ENCODE measurements at regions of chr1 and their contacts with region 1.

Region 1: GRCh38 chr1:155084722-155085503 is 6.3 kb downstream of the EFNA3 start:
- DNase-seq: peak; percentile 97
- ATAC-seq: peak; percentile 78
- H3K4me3 Mint-ChIP-seq: peak overlapping the region; percentile 91
- H3K27ac Mint-ChIP-seq: peak overlapping the region; percentile 94
- H3K4me1 Mint-ChIP-seq: peaks cover 26% of the 10 kb centered on the region
- H3K27me3 Mint-ChIP-seq: peaks cover 35% of the 10 kb centered on the region
- CTCF ChIP-seq: peak; percentile 89

Region 2: GRCh38 chr1:154863315-154864174 is 221.4 kb before region 1 on chr1:
- CTCF ChIA-PET with region 1: no interaction called
- POLR2A ChIA-PET with region 1: no interaction called
- intact Hi-C with region 1: no loop called
- DNase-seq: peak; percentile 58
- ATAC-seq: peak; percentile 57
- H3K4me3 Mint-ChIP-seq: no peak overlapping the region
- H3K27ac Mint-ChIP-seq: peak overlapping the region; percentile 64
- H3K4me1 Mint-ChIP-seq: peaks cover 30% of the 10 kb centered on the region
- H3K27me3 Mint-ChIP-seq: peaks cover 13% of the 10 kb centered on the region
- CTCF ChIP-seq: peak; percentile 41

Region 3: DNA sequence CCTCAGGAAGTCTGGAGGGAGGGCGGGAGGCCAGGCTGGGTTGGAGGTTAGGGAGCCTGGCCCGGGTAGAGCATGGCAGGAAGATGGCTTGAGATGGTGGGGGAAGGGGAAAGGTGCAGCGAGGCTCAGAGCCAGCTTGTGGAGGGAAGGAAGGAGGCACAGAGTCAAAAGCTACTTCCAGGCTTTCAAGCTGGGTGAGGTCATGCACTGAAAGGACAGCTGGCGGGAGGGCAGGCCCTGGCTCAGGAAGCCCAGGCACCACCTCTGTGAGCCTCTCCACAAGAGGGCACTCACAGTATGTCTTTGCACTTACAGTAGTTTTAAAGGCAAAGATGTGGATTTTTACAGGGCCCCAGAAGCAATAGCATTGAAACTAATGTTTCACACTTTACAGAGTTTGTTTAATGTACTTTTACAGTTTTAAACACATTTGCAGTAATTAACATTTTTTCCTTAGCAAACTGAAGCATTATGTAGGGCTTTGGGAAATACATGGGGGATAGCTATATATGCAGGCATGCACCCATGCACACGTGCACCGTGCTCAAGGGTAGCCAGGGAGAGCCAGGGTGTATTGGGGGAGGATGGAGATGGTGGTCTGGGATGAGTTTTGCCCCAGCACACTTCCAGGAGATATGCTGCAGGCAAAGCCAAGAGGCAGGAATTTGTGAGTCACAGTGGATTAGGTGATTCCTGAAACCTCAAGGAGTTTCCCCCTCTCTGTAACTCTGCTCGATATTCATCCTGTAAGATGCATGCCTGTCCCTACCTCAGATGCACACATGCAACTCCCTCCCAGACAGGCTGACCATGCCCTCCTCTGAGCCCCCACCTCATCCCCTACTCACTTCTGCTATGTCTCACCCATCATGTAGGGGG is 39.9 kb before region 1 on chr1:
- CTCF ChIA-PET with region 1: interaction called, 278 read pairs
- POLR2A ChIA-PET with region 1: no interaction called
- intact Hi-C with region 1: loop called (anchors 5 kb)
- DNase-seq: peak; percentile 82
- ATAC-seq: peak; percentile 98
- H3K4me3 Mint-ChIP-seq: no peak overlapping the region
- H3K27ac Mint-ChIP-seq: peak overlapping the region; percentile 10
- H3K4me1 Mint-ChIP-seq: peaks cover 5% of the 10 kb centered on the region
- H3K27me3 Mint-ChIP-seq: peaks cover 2% of the 10 kb centered on the region
- CTCF ChIP-seq: peak; percentile 60

Region 4: DNA sequence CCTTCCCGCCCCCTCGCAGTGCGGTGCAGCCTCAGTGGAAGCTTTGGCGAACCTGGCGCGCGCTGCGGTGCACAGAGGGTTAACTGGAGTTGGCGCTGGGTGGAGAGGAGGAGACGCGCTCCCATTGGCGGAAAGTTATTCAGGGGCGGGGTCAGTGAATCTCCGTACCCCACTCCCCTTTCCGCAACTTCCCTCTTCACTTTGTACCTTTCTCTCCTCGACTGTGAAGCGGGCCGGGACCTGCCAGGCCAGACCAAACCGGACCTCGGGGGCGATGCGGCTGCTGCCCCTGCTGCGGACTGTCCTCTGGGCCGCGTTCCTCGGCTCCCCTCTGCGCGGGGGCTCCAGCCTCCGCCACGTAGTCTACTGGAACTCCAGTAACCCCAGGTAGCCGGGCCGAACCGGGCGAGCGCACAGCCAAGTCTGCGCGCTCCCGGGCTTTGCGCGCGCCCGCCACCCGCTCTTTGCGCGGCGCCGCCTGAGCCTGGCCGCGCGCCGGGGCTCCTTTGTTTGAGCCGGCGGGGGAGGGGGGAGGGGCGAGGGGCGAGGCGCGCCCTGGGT is 21.3 kb before region 1 on chr1 and contains the start of gene EFNA4:
- CTCF ChIA-PET with region 1: interaction called, 278 read pairs
- POLR2A ChIA-PET with region 1: interaction called, 12 read pairs
- intact Hi-C with region 1: loop called (anchors 2 kb)
- DNase-seq: peak; percentile 88
- ATAC-seq: peak; percentile 80
- H3K4me3 Mint-ChIP-seq: peak within 1 kb of the TSS; percentile 77
- H3K27ac Mint-ChIP-seq: peak within 1 kb of the TSS; percentile 39
- H3K4me1 Mint-ChIP-seq: peaks cover 32% of the 10 kb centered on the region
- H3K27me3 Mint-ChIP-seq: no peaks in the 10 kb centered on the region
- CTCF ChIP-seq: no peak
- total RNA-seq, gene EFNA4: 7.1 to 7.8 TPM

Region 5: GRCh38 chr1:155127105-155127964 is 42.4 kb after region 1 on chr1 and contains the start of gene EFNA1:
- CTCF ChIA-PET with region 1: interaction called, 10 read pairs
- POLR2A ChIA-PET with region 1: no interaction called
- intact Hi-C with region 1: loop called (anchors 2 kb)
- DNase-seq: peak; percentile 43
- ATAC-seq: peak; percentile 59
- H3K4me3 Mint-ChIP-seq: peak within 1 kb of the TSS; percentile 73
- H3K27ac Mint-ChIP-seq: peak within 1 kb of the TSS; percentile 34
- H3K4me1 Mint-ChIP-seq: peaks cover 34% of the 10 kb centered on the region
- H3K27me3 Mint-ChIP-seq: peaks cover 21% of the 10 kb centered on the region
- CTCF ChIP-seq: no peak
- total RNA-seq, gene EFNA1: 0.59 to 0.60 TPM

Region 6: GRCh38 chr1:155167166-155168104 is 82.5 kb after region 1 on chr1:
- CTCF ChIA-PET with region 1: interaction called, 312 read pairs
- POLR2A ChIA-PET with region 1: interaction called, 4 read pairs
- intact Hi-C with region 1: no loop called
- DNase-seq: peak; percentile 94
- ATAC-seq: peak; percentile 82
- H3K4me3 Mint-ChIP-seq: peak overlapping the region; percentile 50
- H3K27ac Mint-ChIP-seq: no peak overlapping the region
- H3K4me1 Mint-ChIP-seq: peaks cover 25% of the 10 kb centered on the region
- H3K27me3 Mint-ChIP-seq: no peaks in the 10 kb centered on the region
- CTCF ChIP-seq: peak; percentile 90

Region 7: DNA sequence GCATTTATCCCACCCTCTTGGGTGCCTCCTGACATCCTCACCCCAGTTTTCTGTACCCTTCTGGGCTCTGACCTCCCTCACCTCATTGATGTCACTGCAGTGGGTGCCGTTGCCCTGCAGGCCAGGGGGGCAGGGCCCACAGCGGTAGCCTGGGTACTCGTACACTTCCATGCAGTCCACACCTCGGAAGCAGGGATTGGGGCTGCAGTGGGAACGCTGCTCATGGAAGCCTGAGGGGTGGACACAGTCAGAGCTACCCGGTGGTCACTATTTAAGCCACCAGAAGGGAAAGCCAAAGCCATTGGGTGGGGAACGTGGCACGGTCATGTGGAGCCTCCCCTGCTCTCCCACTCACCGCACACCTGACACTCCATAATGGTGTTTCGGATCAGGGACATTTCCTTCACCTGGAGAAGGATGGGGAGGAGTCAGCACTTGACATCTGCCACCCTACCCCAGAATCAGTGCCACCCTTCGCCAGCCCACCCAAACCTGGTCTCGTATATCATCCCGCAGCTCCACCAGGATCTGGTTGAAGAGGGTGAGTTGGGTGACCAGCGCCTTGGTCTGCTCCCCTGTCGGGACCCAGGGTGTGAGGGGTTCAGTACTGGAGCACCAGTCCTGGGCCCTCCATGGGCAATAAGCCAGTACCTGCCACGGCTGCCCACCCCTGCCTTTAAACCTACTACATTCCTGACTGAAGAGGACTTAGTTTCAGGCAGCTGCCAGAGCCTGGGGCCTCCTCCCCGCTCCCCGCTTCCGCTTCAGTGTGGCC is 118.0 kb after region 1 on chr1:
- CTCF ChIA-PET with region 1: no interaction called
- POLR2A ChIA-PET with region 1: no interaction called
- intact Hi-C with region 1: no loop called
- DNase-seq: no peak
- ATAC-seq: no peak
- H3K4me3 Mint-ChIP-seq: no peak overlapping the region
- H3K27ac Mint-ChIP-seq: no peak overlapping the region
- H3K4me1 Mint-ChIP-seq: peaks cover 11% of the 10 kb centered on the region
- H3K27me3 Mint-ChIP-seq: no peaks in the 10 kb centered on the region
- CTCF ChIP-seq: no peak

Region 8: GRCh38 chr1:155261852-155262673 is 177.2 kb after region 1 on chr1 and contains the start of gene SCAMP3:
- CTCF ChIA-PET with region 1: no interaction called
- POLR2A ChIA-PET with region 1: no interaction called
- intact Hi-C with region 1: no loop called
- DNase-seq: peak; percentile 97
- ATAC-seq: peak; percentile 93
- H3K4me3 Mint-ChIP-seq: peak within 1 kb of the TSS; percentile 96
- H3K27ac Mint-ChIP-seq: peak within 1 kb of the TSS; percentile 89
- H3K4me1 Mint-ChIP-seq: peaks cover 29% of the 10 kb centered on the region
- H3K27me3 Mint-ChIP-seq: no peaks in the 10 kb centered on the region
- CTCF ChIP-seq: no peak
- total RNA-seq, gene SCAMP3: 81.3 to 97.2 TPM